ENCODE measurements at regions of chr7 and their contacts with region 1.

Region 1: DNA sequence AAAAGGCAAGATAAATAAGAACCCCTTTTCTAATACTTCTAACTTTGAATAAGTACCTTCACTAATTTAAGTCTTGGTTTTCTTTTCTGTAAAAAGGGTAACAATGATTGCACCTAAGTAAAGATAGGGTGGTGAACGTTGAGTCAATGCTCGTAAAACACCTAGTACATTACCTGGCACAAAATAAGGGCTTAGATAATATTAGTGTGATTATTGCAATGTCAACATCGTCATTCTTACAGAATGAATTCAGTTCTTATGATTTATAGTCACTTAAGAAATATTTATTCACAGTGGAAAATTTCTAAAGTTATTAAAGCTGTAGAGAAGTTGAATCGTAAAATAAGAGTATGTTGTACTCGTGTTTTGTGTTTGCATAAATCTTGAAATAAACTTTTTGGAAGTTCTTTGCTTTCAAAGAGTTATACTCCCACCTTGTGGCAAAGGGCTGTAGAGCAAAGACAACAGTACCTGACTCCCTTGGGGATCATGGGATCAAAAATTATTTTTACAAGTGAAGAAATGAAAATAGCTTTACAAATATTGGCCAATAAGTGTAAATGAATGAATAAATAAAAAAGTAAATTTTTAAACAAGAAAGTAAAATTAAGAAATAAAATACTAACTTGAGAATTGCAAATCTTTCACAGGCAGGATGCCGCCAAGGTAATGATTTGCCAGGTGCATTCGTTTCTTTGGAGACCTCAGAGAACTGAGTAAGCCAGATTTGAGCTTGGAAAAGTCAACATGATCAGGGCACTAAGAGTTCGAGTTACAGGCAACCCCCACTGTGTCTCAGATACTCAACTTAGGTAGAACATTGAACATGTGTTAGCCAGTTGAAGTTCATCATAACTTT is 285.8 kb upstream of the CACNA2D1 start:
- DNase-seq: no peak
- H3K4me3 Mint-ChIP-seq: no peak overlapping the region
- H3K27ac Mint-ChIP-seq: no peak overlapping the region
- H3K4me1 Mint-ChIP-seq: no peaks in the 10 kb centered on the region
- H3K27me3 Mint-ChIP-seq: no peaks in the 10 kb centered on the region

Region 2: DNA sequence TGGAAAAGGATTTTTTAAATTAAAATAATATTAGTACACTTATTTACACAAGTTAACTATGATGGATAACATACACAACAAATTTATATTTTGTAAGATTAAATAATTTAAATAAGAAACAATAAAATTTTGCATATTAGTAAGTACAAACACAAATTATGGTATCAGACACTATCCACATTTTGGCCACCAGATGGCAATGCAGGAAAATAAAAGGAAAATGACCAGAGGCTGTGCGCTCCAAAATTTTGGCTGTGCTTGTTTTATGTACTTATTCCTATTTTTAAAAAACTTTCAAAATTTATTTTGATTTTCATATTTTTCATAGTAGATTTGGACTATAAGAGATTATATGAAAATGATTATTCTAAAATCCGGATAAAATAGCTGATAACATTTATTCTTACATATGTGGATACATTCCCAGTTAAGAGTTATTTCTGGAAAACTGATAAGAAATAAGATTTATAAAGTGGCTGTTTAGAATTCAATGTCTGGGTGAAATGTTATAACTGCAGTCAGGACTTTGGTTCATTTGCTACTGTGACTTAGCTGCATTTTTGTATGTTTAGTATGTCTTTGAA is 684.8 kb before region 1 on chr7:
- intact Hi-C with region 1: loop called (anchors 2 kb)
- DNase-seq: peak; percentile 61
- H3K4me3 Mint-ChIP-seq: no peak overlapping the region
- H3K27ac Mint-ChIP-seq: no peak overlapping the region
- H3K4me1 Mint-ChIP-seq: no peaks in the 10 kb centered on the region
- H3K27me3 Mint-ChIP-seq: no peaks in the 10 kb centered on the region

Region 3: DNA sequence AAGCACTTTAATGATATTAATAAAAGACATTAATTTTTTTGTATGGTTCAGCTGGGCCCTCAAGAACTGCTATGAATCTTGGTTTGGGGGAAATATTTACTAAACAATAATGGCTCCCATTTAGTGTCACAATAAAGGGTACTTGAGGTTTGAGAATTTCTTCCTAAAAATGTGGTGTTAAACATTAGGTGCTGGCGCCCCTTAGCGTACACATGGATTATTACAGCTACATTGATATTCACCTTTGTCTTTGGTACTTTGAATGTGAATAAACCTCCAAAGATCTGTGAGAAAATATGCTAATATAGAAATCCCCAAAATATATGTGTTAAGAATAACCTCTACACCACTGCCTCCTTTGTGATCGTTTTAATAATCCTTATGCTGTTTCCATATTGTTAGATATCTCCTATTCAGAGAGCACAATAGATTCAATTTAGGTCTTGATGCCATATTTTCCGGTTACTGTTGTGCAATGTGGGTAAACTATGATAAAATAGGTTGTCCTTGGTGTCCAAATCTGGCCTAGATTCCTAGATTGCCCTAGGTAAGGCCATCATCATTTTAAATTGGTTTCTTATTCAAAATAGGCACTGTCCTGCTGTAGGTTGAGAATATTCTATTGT is 124.0 kb before region 1 on chr7:
- intact Hi-C with region 1: loop called (anchors 10 kb)
- DNase-seq: no peak
- H3K4me3 Mint-ChIP-seq: no peak overlapping the region
- H3K27ac Mint-ChIP-seq: no peak overlapping the region
- H3K4me1 Mint-ChIP-seq: no peaks in the 10 kb centered on the region
- H3K27me3 Mint-ChIP-seq: no peaks in the 10 kb centered on the region

Region 4: DNA sequence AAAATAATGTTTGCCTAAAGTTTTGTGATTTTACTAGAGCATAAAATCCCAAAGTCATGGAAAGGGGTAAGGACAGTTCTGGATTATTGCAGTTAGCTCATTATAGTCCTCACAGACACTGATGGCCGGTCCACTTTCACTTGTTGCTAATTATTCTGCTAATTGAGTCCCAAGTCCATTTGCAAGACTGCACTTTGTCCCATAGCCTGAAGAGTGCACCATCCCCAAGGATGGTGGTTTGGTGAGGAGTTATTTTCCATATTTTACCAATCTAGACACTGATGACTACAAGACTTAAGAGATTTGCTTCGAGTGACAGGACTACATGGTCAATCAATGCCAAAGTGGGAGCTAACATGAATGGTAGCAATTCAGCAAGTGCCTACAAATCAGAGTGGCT is 104.0 kb before region 1 on chr7:
- intact Hi-C with region 1: no loop called
- DNase-seq: no peak
- H3K4me3 Mint-ChIP-seq: no peak overlapping the region
- H3K27ac Mint-ChIP-seq: no peak overlapping the region
- H3K4me1 Mint-ChIP-seq: no peaks in the 10 kb centered on the region
- H3K27me3 Mint-ChIP-seq: no peaks in the 10 kb centered on the region

Region 5: DNA sequence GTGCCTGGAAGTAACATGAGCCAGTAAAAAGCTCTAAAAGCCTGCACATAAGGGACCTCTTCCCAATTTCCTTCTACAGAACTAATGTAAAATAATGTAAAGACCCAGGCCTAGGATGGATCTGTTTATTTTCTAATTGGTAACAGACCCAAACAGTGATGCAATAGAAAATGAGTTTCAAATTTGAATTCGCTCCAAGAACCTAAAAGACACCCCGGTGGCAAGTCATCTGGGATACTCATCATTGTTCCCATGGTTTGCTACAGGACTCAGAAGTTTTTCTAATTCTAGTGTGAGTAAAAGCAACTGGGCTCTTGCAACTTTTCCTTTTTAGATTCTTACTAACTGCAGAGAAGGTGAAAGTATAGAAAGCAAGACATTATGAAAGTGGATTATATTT is 14.5 kb before region 1 on chr7:
- intact Hi-C with region 1: loop called (anchors 2 kb)
- DNase-seq: no peak
- H3K4me3 Mint-ChIP-seq: no peak overlapping the region
- H3K27ac Mint-ChIP-seq: no peak overlapping the region
- H3K4me1 Mint-ChIP-seq: no peaks in the 10 kb centered on the region
- H3K27me3 Mint-ChIP-seq: no peaks in the 10 kb centered on the region

Measured in activated CD4-positive, alpha-beta T cell treated with anti-CD3 and anti-CD28 coated beads, Interleukin-2, amount 10 ng/mL, durations not matched to agents 24 days and 14 days (primary cell).